Activated CD4-positive, alpha-beta T cell treated with anti-CD3 and anti-CD28 coated beads, Interleukin-2, amount 10 ng/mL, durations not matched to agents 24 days and 14 days (primary cell): ENCODE measurements at regions of chr9 and their contacts with region 1.

Region 1: DNA sequence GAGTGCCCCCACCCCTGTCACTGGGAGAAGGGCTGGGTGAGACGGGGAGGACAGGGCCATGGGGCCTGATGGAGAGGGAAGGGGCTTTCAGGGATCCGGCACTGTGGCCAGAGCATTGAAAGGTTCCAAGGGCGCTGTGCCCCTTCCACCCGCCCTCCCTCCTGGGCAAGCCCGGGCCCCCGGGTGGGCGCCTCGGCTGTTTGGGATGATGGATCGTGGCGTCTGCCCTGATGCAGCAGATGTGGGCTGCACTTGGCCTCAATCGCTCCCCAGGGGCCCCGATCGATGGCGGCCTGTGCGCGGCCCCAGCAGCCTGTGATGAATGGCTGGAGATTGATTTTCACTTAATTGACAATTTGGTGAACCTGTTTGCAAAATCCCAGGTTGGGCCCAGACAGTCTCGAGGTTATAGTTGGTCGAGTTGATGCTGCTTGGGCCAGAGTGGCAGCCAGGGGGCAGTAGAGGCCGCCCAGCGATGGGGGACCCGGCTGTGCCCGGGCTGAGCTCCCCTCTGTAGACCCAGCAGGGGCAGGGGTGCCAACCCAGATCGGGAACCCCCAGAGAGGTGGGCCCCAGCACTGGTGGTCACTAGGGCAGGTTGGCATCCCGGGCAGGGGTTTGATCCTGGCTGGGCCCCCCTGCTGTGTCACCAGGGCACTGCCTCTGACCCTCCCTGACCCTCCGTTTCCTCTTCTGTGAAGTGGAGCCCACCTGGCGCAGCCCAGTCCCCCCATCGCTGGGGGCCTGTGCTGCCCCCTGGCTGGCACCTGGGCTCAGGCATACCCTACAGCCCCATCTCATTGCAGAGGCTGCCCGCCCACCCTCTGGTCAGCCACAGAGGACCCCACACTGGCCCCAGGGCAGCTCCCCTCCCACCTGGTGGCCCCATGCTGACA is 34.7 kb downstream of the LHX3 start:
- DNase-seq: peak; percentile 86
- H3K4me3 Mint-ChIP-seq: no peak overlapping the region
- H3K27ac Mint-ChIP-seq: no peak overlapping the region
- H3K4me1 Mint-ChIP-seq: no peaks in the 10 kb centered on the region
- H3K27me3 Mint-ChIP-seq: peaks cover 2% of the 10 kb centered on the region

Region 2: GRCh38 chr9:135961277-135961705 is 209.0 kb before region 1 on chr9 and contains the start of gene UBAC1:
- intact Hi-C with region 1: no loop called
- DNase-seq: peak; percentile 99
- H3K4me3 Mint-ChIP-seq: peak within 1 kb of the TSS; percentile 93
- H3K27ac Mint-ChIP-seq: peak within 1 kb of the TSS; percentile 85
- H3K4me1 Mint-ChIP-seq: peaks cover 32% of the 10 kb centered on the region
- H3K27me3 Mint-ChIP-seq: peaks cover 5% of the 10 kb centered on the region
- total RNA-seq, gene UBAC1: 43.2 and 47.7 TPM in 2 replicates

Region 3: DNA sequence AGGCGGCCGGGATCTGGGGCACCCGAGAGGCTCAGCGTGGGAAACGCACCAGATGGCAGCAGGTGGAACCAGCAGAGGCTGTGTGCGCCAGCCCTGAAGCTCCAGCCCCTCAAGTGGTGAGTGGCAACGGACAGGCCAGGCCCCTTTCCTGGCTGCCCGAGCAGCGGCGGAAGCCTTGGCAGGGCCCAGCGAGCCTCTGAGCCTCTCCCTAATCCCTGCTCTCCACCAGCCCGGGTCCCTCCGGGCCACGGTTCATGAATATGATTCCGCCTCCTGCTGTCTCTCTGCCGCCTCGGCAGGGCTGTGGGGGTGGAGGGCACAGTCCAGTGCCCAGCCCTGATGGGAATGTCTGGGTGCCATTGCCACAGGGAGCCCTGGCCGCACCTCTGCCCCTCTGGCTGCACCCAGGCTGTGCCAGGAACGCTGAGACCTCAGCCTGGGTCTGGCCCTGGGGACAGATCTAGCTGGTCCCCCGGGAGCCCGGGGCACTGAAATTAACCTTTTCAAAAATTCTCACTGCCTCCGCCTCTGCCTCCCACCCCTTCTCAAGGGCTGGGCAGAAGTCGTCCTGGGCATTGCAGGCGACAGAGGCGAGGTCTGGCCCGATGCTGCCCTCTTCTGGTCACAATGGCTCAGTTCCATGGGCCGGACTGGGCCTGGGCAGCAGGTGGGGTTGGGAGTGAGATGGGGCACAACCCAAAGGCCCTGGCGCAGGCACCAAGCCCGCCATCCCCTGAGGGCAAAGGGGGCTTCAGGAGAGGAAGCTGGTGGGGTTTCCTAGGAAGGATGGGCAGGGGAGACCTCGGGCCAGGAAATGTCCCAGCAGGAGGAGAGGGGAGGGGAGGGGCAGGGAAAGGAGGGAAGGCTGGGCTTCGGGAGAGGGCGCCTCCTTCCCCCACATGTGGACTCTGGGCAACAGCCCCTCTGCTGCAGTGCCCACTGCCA is 113.3 kb after region 1 on chr9:
- intact Hi-C with region 1: loop called (anchors 1 kb)
- DNase-seq: peak; percentile 92
- H3K4me3 Mint-ChIP-seq: no peak overlapping the region
- H3K27ac Mint-ChIP-seq: no peak overlapping the region
- H3K4me1 Mint-ChIP-seq: peaks cover 5% of the 10 kb centered on the region
- H3K27me3 Mint-ChIP-seq: no peaks in the 10 kb centered on the region